GM10248 (cell line): ENCODE measurements at regions of chr5 and their contacts with region 1.

Region 1: DNA sequence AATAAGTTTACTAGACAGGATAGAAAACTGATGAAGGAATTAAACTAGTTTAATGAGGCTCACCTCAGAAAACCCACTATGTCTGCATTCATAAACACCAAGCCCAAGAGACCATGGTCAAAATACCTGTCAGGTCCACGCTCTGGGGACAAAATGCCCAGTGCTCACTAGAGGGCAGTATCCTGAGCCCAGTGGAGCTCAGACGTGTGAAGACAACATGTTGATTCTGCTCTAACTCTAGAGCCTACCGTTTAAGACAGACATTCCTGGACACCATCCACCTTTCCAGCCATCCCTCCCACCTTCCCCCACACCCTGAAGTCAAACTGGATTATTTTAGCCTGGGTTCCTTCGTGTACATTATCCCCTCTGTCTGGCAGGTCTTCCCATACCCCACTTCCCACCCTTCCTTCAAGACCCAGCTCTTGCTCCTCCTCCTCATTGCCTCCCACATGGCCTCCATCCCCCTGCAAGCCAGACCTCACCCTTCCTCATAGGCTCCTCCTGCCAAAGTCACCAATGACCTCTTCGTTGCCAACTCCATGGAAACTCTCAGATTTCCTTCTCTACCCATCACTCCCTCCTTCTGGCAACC is 142.3 kb upstream of the FSTL4 start:
- DNase-seq: peak; percentile 47
- CTCF ChIP-seq: peak; percentile 59

Region 2: DNA sequence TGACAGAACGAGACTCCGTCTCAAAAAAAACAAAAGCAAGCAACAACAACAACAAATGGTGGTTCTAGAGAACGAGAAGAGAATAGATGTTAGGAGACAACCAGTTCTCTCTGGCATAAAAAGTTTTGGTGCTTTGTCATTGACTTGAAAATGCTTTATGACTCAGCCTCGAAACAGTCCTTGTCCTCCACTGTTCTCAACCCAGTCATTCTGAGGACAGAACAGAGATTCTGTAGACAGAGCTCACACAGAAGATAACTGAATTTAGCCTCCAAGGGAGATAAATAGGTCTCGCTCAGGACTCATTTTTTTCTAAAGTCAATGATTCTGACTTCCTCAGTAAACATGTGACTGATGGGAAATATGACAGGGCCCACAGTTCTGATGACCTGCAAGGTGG is 66.3 kb before region 1 on chr5:
- CTCF ChIA-PET with region 1: no interaction called
- POLR2A ChIA-PET with region 1: no interaction called
- DNase-seq: peak; percentile 25
- CTCF ChIP-seq: no peak

Region 3: GRCh38 chr5:133944263-133945185 is 189.9 kb after region 1 on chr5:
- CTCF ChIA-PET with region 1: interaction called, 14 read pairs
- POLR2A ChIA-PET with region 1: no interaction called
- DNase-seq: peak; percentile 67
- CTCF ChIP-seq: peak; percentile 68